ENCODE measurements at regions of chr3 and their contacts with region 1.

Region 1: DNA sequence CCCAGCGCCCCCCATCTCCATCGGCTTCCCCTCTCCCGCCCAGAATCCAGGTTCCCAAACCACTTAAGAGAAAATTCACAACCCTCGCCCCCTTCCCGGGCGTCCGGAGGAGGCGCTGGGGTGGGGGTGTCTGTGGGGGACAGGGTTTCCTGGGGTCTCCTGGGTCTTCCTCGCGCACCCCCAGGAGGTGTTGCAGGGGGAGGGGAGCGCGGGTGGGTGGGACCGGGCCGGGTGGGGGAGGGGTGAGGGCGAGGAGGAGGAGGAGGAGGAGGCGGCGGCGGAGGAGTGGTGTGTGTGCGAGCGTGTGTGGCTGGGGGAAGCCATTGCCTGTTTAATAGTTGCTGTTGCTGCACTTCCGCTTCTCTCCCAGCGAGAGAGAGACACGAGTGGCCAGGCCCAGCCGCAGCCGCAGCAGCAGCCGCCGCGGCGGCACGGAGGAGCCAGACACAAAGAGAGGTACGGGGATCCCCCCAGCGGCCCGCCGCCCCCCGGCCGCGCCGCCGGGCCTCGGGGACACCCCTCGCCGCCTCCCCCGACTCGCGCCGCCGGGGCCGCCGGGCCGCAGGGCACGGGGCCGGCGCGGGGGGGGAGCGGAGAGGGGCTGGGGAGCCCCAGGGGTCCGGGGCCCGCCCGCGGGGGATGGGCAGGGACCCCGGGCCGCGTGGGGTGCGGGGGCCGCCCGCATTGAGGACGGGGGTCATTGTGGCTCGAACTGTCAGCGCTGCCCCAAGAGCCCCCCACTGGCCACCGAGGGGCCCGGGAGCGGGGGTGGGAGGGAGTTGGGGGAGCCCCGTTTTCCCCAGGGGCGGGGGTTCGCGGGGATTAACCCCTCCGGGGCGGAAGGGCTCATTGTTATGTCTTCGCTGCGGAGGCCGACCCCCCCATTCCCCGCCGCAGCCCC is at the start of gene UBE2E1:
- DNase-seq: peak; percentile 89
- ATAC-seq: peak; percentile 81
- total RNA-seq, gene UBE2E1: 69.9 TPM

Region 2: DNA sequence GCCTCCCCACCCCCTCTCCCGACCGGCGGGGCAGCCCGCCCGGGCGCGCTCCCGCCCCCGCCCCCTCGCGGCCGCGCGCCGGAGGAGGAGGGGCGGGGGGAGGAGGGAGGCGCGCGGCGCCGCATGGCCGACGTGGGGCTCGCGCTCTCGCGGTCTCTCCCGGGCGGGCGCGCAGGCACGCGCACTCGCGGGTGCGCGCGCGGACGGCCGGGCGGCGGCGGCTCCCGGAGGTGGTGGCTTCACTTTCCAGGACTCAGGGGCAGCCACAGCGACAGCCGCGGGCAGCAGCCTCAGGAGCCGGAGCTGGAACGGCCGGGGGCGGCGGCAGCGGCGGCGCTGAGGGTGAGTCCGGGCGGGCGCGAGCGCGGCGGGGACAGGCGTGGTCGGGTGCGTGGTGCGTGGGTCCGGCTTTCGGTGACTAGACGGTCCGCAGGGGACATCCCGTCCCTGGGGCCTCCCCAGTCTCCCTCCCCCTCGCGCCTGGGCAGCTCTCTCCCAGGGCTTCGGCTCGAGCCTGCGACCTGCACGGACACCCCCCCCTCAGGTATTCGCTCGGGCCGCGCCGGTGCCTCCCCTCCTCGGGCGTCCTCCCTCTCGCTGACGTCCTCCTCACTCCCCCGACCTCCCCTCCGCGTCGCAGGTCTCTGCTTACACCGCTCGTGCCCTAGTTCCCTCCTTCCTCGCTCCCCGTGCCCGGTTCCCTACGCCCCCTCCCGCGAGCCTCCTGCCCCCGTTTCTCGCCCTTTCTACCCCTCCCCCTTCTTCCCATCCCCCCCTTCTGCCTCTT is 602.8 kb before region 1 on chr3 and contains the start of gene UBE2E2:
- intact Hi-C with region 1: loop called (anchors 10 kb)
- DNase-seq: peak; percentile 80
- ATAC-seq: peak; percentile 91
- total RNA-seq, gene UBE2E2: 37.4 TPM

Region 3: DNA sequence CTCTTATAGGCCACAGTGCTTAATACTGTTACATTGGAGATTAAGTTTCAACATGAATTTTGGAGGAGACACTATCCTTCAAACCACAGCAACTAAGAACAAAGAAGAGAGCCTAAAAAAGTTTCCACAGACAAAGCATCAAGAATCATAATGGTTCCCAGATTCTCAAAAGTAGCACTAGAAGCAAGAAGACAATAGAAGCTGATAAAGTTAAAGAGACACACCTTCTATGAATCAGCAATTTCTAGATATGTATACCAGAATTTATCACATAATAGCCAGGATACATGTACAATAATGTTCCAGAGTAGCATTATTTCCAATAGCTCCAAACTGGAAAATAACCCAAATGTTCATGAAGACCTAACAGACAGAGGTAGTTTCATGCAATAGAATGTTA is 98.7 kb after region 1 on chr3:
- intact Hi-C with region 1: no loop called
- DNase-seq: no peak
- ATAC-seq: no peak